ENCODE measurements at regions of chr9 and their contacts with region 1.

Region 1: DNA sequence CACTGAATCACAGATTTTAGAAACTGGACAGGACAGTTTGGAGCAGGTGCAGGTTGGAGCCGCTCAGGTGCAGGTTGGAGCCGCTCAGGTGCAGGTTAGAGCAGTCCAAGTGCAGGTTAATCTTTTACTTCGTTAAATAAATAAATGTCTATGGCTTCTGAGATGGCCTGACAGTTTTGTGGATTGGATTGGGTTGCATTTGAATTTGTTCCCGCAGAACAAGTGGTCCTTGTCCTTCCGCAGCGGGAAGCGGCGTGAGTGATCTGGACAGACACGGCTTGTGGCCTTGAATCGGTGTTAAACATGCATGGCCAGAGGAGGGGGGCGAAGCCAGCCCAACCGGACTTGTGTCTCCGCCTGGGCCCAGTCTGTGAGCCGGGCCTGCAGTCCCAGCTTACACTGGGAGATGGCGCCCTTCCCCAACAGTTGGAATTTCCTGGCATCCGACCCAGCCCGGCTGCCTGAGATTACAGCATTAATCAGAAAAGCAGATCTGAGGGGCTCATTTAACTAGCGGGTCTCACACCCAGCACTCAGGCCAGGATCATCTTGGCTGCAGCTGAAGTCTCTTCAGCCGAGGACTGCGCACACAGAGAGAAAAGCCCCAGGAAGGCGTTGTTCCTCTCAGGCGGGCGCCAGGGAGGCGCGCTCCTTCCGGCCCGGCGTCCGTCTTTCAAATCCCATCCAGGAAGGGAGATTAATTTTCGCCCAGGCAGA is 1.5 kb upstream of the OLFM1 start:
- DNase-seq: peak; percentile 92
- ATAC-seq: peak; percentile 87
- H3K4me3 ChIP-seq: peak overlapping the region; percentile 17
- H3K27ac ChIP-seq: no peak overlapping the region
- H3K4me1 ChIP-seq: peaks cover 23% of the 10 kb centered on the region
- H3K27me3 ChIP-seq: peaks cover 26% of the 10 kb centered on the region
- CTCF ChIP-seq: peak; percentile 90

Region 2: DNA sequence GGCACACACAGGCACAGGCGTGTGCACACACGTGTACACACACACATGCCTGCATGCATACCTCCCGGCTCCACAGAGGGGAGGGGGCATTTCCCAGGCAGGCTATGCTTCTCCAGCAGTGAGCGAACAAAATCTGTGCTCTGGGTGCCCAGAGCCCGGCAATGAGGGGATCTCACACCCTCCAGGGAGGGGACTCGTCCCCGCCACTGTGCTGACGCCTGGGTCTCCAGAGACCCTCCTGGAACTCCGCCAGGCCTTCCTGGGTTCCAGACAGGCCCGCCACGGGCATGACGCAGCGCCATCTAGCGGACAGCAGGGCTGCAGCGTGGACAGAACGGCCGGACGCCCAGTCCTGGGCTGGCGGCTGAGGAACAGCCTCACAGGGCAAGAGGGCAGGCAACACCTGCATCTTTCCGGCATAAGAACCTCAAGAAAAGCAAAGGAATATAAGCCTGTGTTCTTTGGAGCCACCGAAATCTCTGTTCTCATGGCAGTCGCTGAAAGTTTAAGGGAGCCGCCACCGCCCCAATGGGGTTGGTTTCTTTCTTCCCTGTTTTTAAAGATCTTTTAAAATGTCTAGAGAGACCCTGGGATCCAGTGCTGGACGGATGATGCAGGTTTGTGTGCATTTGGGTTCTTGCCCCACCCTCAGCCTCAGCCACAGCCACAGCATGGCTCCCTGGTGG is 258.0 kb after region 1 on chr9:
- intact Hi-C with region 1: loop called (anchors 10 kb)
- DNase-seq: peak; percentile 84
- ATAC-seq: peak; percentile 71
- H3K4me3 ChIP-seq: no peak overlapping the region
- H3K27ac ChIP-seq: no peak overlapping the region
- H3K4me1 ChIP-seq: no peaks in the 10 kb centered on the region
- H3K27me3 ChIP-seq: peaks cover 11% of the 10 kb centered on the region
- CTCF ChIP-seq: peak; percentile 91

Region 3: GRCh38 chr9:135410831-135411473 is 325.0 kb after region 1 on chr9:
- intact Hi-C with region 1: loop called (anchors 10 kb)
- DNase-seq: no peak
- ATAC-seq: no peak
- H3K4me3 ChIP-seq: no peak overlapping the region
- H3K27ac ChIP-seq: no peak overlapping the region
- H3K4me1 ChIP-seq: no peaks in the 10 kb centered on the region
- H3K27me3 ChIP-seq: no peaks in the 10 kb centered on the region
- CTCF ChIP-seq: no peak

Region 4: GRCh38 chr9:135743546-135744332 is 657.8 kb after region 1 on chr9:
- intact Hi-C with region 1: no loop called
- DNase-seq: no peak
- ATAC-seq: no peak
- H3K4me3 ChIP-seq: no peak overlapping the region
- H3K27ac ChIP-seq: no peak overlapping the region
- H3K4me1 ChIP-seq: no peaks in the 10 kb centered on the region
- H3K27me3 ChIP-seq: peaks cover 14% of the 10 kb centered on the region
- CTCF ChIP-seq: no peak

Measured in upper lobe of right lung (tissue), 1 donor.